ENCODE measurements at regions of chr1 and their contacts with region 1.

Region 1: DNA sequence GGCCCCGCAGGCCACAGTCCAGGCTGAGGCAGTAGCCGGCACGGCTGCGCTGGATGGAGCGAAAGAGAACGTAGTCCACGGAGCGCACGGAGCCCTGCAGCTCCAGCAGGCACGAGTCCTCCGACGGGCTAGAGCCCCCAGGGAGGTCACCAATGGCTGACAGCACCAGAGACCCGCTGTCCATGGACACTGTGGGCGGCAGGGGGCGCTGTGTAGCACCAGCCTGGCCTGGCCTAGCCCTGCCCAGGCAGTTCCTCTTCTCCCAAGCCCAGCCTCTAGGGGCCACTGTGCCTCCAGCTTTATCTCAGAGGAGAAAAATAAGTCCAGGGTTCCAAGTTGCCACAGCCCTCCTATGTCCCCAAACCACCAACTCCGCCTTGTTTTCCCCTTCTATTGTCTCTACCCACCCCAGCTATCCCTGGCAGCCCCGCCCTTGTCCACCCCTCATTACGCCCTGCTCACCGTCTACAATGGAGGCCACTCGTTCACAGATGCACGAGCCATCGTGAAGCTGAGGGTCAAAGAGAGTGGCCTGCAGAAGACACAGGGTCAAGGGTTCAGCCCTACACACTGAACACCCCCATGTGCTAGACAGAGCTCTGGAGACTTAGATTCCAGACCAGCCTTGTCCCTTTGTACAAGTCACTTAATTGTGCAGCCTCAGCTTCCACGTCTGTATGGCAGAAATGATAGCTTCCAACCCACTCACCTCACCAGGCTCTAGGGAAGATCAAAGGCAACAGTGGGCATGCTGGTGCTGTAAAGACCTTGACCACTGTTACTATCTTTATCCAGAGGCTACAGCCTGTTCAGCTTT is 4.4 kb downstream of the ENTREP3 start:
- DNase-seq: peak; percentile 95
- ATAC-seq: peak; percentile 96
- H3K4me3 ChIP-seq: peak overlapping the region in 4 of 5 experiments; percentile 47 to 69 (median 60)
- H3K4me3 Mint-ChIP-seq: peak overlapping the region; percentile 79
- H3K27ac ChIP-seq: peak overlapping the region; percentile 8 to 52
- H3K27ac Mint-ChIP-seq: peak overlapping the region; percentile 47
- H3K4me1 ChIP-seq: peaks cover 19 to 30% of the 10 kb centered on the region in 2 donors
- H3K4me1 Mint-ChIP-seq: peaks cover 32% of the 10 kb centered on the region
- H3K27me3 ChIP-seq: no peaks in the 10 kb centered on the region
- H3K27me3 Mint-ChIP-seq: no peaks in the 10 kb centered on the region
- CTCF ChIP-seq: peak; percentile 100

Region 2: DNA sequence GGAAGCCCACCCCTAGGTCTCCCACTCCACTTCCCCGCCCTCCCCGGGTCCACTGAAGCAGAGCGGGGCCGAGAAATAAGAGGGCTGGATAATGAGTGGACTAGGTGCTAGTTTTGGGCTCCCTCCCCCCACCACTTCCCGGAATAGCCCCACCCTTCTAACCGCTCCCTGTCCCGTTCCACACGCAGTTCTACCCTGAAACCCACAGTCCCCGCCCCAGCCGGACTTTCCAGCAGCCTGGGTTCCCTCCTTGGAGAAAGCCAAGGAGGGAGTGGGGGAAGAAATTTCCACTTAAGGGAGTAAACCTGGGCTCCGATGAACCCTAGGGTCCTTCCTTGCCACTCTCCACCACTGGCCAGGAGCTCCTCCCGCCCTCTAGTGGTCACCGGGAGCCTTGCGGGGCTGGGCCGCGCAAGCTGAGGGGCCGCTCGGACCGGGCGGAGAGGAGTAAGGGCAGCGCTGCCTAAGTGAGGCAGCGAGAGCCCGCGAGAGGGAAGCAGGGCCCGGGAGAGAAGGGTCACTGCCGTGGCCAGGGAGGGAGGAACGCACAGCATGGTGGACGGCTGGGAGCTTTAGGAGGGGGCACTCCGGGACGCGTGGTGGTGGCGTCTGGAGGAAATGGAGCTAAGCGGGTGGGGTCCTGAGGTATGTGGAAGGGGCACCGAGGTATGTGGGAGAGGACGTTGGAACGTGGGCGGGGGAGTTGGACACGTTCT is 57.4 kb before region 1 on chr1:
- CTCF ChIA-PET with region 1: interaction called, 10 read pairs
- POLR2A ChIA-PET with region 1: no interaction called
- intact Hi-C with region 1: no loop called
- DNase-seq: peak; percentile 82
- ATAC-seq: peak; percentile 72
- H3K4me3 ChIP-seq: peak overlapping the region; percentile 44 to 74 (median 50)
- H3K4me3 Mint-ChIP-seq: peak overlapping the region; percentile 91
- H3K27ac ChIP-seq: no peak overlapping the region
- H3K27ac Mint-ChIP-seq: peak overlapping the region; percentile 89
- H3K4me1 ChIP-seq: peaks cover 15 to 23% of the 10 kb centered on the region in 2 donors
- H3K4me1 Mint-ChIP-seq: peaks cover 30% of the 10 kb centered on the region
- H3K27me3 ChIP-seq: peaks cover 0 to 19% (median 1%) of the 10 kb centered on the region in 4 experiments
- H3K27me3 Mint-ChIP-seq: no peaks in the 10 kb centered on the region
- CTCF ChIP-seq: peak; percentile 94

Region 3: GRCh38 chr1:155227261-155228095 is 23.4 kb before region 1 on chr1:
- CTCF ChIA-PET with region 1: interaction called, 12 read pairs
- POLR2A ChIA-PET with region 1: interaction called, 3 read pairs
- intact Hi-C with region 1: no loop called
- DNase-seq: peak; percentile 98
- ATAC-seq: peak; percentile 97
- H3K4me3 ChIP-seq: peak overlapping the region; percentile 61 to 93 (median 68)
- H3K4me3 Mint-ChIP-seq: peak overlapping the region; percentile 85
- H3K27ac ChIP-seq: peak overlapping the region; percentile 70
- H3K27ac Mint-ChIP-seq: peak overlapping the region; percentile 91
- H3K4me1 ChIP-seq: peaks cover 43 to 56% of the 10 kb centered on the region in 2 donors
- H3K4me1 Mint-ChIP-seq: peaks cover 43% of the 10 kb centered on the region
- H3K27me3 ChIP-seq: no peaks in the 10 kb centered on the region
- H3K27me3 Mint-ChIP-seq: no peaks in the 10 kb centered on the region
- CTCF ChIP-seq: no peak

Region 4: GRCh38 chr1:155267373-155267772 is 16.5 kb after region 1 on chr1:
- CTCF ChIA-PET with region 1: interaction called, 71 read pairs
- POLR2A ChIA-PET with region 1: interaction called, 5 read pairs
- intact Hi-C with region 1: no loop called
- DNase-seq: no peak
- ATAC-seq: no peak
- H3K4me3 ChIP-seq: no peak overlapping the region
- H3K4me3 Mint-ChIP-seq: no peak overlapping the region
- H3K27ac ChIP-seq: no peak overlapping the region
- H3K27ac Mint-ChIP-seq: no peak overlapping the region
- H3K4me1 ChIP-seq: peaks cover 3 to 15% of the 10 kb centered on the region in 2 donors
- H3K4me1 Mint-ChIP-seq: peaks cover 15% of the 10 kb centered on the region
- H3K27me3 ChIP-seq: no peaks in the 10 kb centered on the region
- H3K27me3 Mint-ChIP-seq: no peaks in the 10 kb centered on the region
- CTCF ChIP-seq: no peak

Region 5: GRCh38 chr1:155308493-155309422 is 57.9 kb after region 1 on chr1 and contains the start of gene FDPS:
- CTCF ChIA-PET with region 1: interaction called, 46 read pairs
- POLR2A ChIA-PET with region 1: no interaction called
- intact Hi-C with region 1: loop called (anchors 1 kb)
- DNase-seq: peak; percentile 99
- ATAC-seq: peak; percentile 99
- H3K4me3 ChIP-seq: peak within 1 kb of the TSS; percentile 62 to 100 (median 88)
- H3K4me3 Mint-ChIP-seq: peak within 1 kb of the TSS; percentile 93
- H3K27ac ChIP-seq: peak within 1 kb of the TSS; percentile 91 to 94
- H3K27ac Mint-ChIP-seq: peak within 1 kb of the TSS; percentile 93
- H3K4me1 ChIP-seq: peaks cover 10 to 23% of the 10 kb centered on the region in 2 donors
- H3K4me1 Mint-ChIP-seq: peaks cover 27% of the 10 kb centered on the region
- H3K27me3 ChIP-seq: no peaks in the 10 kb centered on the region
- H3K27me3 Mint-ChIP-seq: no peaks in the 10 kb centered on the region
- CTCF ChIP-seq: no peak
- total RNA-seq, gene FDPS: 128 and 141 TPM in 2 replicates

Region 6: GRCh38 chr1:155504207-155504606 is 253.4 kb after region 1 on chr1:
- CTCF ChIA-PET with region 1: interaction called, 54 read pairs
- POLR2A ChIA-PET with region 1: no interaction called
- intact Hi-C with region 1: loop called (anchors 1 kb)
- DNase-seq: peak; percentile 65
- ATAC-seq: peak; percentile 49
- H3K4me3 ChIP-seq: no peak overlapping the region
- H3K4me3 Mint-ChIP-seq: no peak overlapping the region
- H3K27ac ChIP-seq: no peak overlapping the region
- H3K27ac Mint-ChIP-seq: no peak overlapping the region
- H3K4me1 ChIP-seq: peaks cover 33 to 34% of the 10 kb centered on the region in 2 donors
- H3K4me1 Mint-ChIP-seq: peaks cover 43% of the 10 kb centered on the region
- H3K27me3 ChIP-seq: no peaks in the 10 kb centered on the region
- H3K27me3 Mint-ChIP-seq: no peaks in the 10 kb centered on the region
- CTCF ChIP-seq: peak; percentile 71

Region 7: GRCh38 chr1:155596864-155597263 is 346.0 kb after region 1 on chr1:
- CTCF ChIA-PET with region 1: interaction called, 45 read pairs
- POLR2A ChIA-PET with region 1: no interaction called
- intact Hi-C with region 1: loop called (anchors 1 kb)
- DNase-seq: no peak
- ATAC-seq: no peak
- H3K4me3 ChIP-seq: no peak overlapping the region
- H3K4me3 Mint-ChIP-seq: no peak overlapping the region
- H3K27ac ChIP-seq: no peak overlapping the region
- H3K27ac Mint-ChIP-seq: no peak overlapping the region
- H3K4me1 ChIP-seq: peaks cover 0 to 3% of the 10 kb centered on the region in 2 donors
- H3K4me1 Mint-ChIP-seq: peaks cover 10% of the 10 kb centered on the region
- H3K27me3 ChIP-seq: no peaks in the 10 kb centered on the region
- H3K27me3 Mint-ChIP-seq: no peaks in the 10 kb centered on the region
- CTCF ChIP-seq: no peak

Measured in B cell (primary cell).